CD4-positive, alpha-beta T cell (primary cell): ENCODE measurements at regions of chr19 and their contacts with region 1.

Region 1: GRCh38 chr19:19562665-19563347 is 24.7 kb downstream of the CILP2 start:
- DNase-seq: peak in 10 of 14 experiments; percentile 27 to 74 (median 45)
- ATAC-seq: peak; percentile 72
- H3K4me3 ChIP-seq: no peak overlapping the region
- H3K4me3 Mint-ChIP-seq: no peak overlapping the region
- H3K27ac ChIP-seq: no peak overlapping the region
- H3K27ac Mint-ChIP-seq: no peak overlapping the region
- H3K4me1 ChIP-seq: peaks cover 19% of the 10 kb centered on the region
- H3K4me1 Mint-ChIP-seq: peaks cover 33% of the 10 kb centered on the region
- H3K27me3 ChIP-seq: no peaks in the 10 kb centered on the region
- H3K27me3 Mint-ChIP-seq: no peaks in the 10 kb centered on the region
- CTCF ChIP-seq: peak; percentile 36

Region 2: GRCh38 chr19:19203012-19203856 is 359.6 kb before region 1 on chr19 and contains the start of gene NR2C2AP:
- CTCF ChIA-PET with region 1: no interaction called
- POLR2A ChIA-PET with region 1: no interaction called
- intact Hi-C with region 1: no loop called
- DNase-seq: peak; percentile 83 to 97 (median 89)
- ATAC-seq: peak; percentile 93
- H3K4me3 ChIP-seq: peak within 1 kb of the TSS; percentile 89
- H3K4me3 Mint-ChIP-seq: peak within 1 kb of the TSS; percentile 94
- H3K27ac ChIP-seq: peak within 1 kb of the TSS; percentile 77 to 82
- H3K27ac Mint-ChIP-seq: peak within 1 kb of the TSS; percentile 94
- H3K4me1 ChIP-seq: peaks cover 48% of the 10 kb centered on the region
- H3K4me1 Mint-ChIP-seq: peaks cover 29% of the 10 kb centered on the region
- H3K27me3 ChIP-seq: no peaks in the 10 kb centered on the region
- H3K27me3 Mint-ChIP-seq: peaks cover 12% of the 10 kb centered on the region
- CTCF ChIP-seq: no peak
- total RNA-seq, gene NR2C2AP: 10.5 to 11.5 TPM

Region 3: DNA sequence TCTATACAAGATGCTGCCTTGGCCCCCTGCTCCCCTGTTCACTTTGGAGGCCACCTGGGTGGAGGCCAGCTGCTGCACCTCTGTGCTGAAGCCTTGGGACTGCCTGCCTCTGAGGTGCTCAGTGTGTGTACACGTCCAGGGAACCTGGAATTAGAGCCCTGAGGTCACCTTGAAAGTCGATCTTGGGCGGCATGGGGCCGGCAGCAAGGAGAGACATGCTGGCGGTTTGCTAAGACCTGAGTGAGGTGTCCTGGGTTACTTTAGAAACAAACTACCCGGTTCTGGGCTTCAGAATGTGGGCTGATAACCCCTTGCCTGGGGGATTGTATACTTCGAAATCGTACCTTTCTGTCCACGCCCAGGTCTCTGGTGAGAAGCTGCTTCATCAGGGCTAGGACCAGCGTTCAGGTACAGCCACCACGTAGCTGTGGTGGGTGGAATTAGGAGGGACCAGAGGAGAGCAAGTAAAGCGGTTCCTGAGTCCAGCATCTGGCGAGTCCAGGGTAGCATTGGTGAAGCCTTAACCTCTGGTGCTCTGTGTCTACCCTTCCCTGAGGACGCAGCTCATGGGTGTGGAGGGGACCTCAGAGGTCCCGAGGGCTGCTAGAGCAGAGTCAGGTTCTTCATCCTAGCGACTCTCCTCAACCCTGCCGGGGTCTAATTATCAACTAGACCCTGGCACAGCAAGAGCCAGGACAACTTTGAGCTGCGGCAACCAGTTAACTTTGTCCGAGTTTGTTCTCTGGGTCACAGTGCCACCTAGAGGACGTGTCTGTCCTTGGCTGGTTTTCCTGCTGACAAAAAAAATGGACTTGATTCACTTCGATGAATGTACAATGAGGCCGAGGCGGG is 72.8 kb before region 1 on chr19:
- CTCF ChIA-PET with region 1: no interaction called
- POLR2A ChIA-PET with region 1: no interaction called
- intact Hi-C with region 1: no loop called
- DNase-seq: peak; percentile 71 to 92 (median 80)
- ATAC-seq: peak; percentile 23
- H3K4me3 ChIP-seq: no peak overlapping the region
- H3K4me3 Mint-ChIP-seq: peak overlapping the region; percentile 32
- H3K27ac ChIP-seq: peak overlapping the region; percentile 86 to 96
- H3K27ac Mint-ChIP-seq: peak overlapping the region; percentile 99
- H3K4me1 ChIP-seq: peaks cover 59% of the 10 kb centered on the region
- H3K4me1 Mint-ChIP-seq: peaks cover 53% of the 10 kb centered on the region
- H3K27me3 ChIP-seq: no peaks in the 10 kb centered on the region
- H3K27me3 Mint-ChIP-seq: no peaks in the 10 kb centered on the region
- CTCF ChIP-seq: peak; percentile 81

Region 4: GRCh38 chr19:19597809-19598306 is 35.1 kb after region 1 on chr19:
- CTCF ChIA-PET with region 1: no interaction called
- POLR2A ChIA-PET with region 1: interaction called, 4 read pairs
- intact Hi-C with region 1: loop called (anchors 5 kb)
- DNase-seq: peak in 10 of 14 experiments; percentile 20 to 96 (median 40)
- ATAC-seq: peak; percentile 73
- H3K4me3 ChIP-seq: no peak overlapping the region
- H3K4me3 Mint-ChIP-seq: peak overlapping the region; percentile 55
- H3K27ac ChIP-seq: peak overlapping the region; percentile 94 to 97
- H3K27ac Mint-ChIP-seq: peak overlapping the region; percentile 95
- H3K4me1 ChIP-seq: peaks cover 96% of the 10 kb centered on the region
- H3K4me1 Mint-ChIP-seq: peaks cover 62% of the 10 kb centered on the region
- H3K27me3 ChIP-seq: no peaks in the 10 kb centered on the region
- H3K27me3 Mint-ChIP-seq: no peaks in the 10 kb centered on the region
- CTCF ChIP-seq: no peak